ENCODE measurements at regions of chr14 and their contacts with region 1.

Region 1: GRCh38 chr14:50085570-50086320 is 30.6 kb downstream of the VCPKMT start:
- DNase-seq: no peak
- H3K4me3 Mint-ChIP-seq: peak overlapping the region; percentile 28
- H3K27ac Mint-ChIP-seq: peak overlapping the region; percentile 98
- H3K4me1 Mint-ChIP-seq: peaks cover 86% of the 10 kb centered on the region
- H3K27me3 Mint-ChIP-seq: peaks cover 4% of the 10 kb centered on the region

Region 2: DNA sequence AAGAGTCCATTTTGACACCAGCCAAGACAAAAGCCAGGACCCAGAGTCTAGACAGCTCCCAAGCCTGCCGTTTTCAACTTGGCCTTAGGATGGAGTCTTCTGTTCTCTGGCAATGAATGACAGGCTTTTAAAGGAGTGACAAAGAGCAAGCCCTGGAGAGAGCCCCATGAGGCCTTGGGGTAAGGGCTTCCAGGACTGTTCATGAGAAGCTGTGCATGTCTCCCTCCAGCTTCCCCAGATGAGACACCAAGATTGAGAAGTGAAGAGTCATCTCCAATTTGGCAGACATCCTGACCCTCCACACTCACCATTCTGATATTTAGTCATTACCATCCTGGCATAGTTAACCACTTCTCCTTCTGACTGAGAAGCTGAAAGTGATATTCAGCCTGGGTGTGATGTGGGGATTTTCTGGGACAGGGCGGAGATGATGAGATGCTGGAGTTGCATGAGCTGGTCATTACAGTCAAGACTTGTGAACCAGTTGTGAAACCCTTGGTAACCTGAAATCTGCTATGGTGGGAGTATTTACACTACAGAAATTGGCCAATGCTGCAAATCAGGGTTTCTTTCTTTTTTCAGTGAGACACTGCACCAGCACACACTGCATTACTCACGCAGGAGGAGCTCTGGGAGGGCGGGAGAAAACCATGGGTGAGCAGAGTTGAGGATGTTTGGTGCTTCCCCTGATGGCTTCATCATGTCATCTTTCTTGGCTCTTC is 47.2 kb before region 1 on chr14:
- CTCF ChIA-PET with region 1: interaction called, 7 read pairs
- POLR2A ChIA-PET with region 1: interaction called, 37 read pairs
- DNase-seq: peak; percentile 70
- H3K4me3 Mint-ChIP-seq: peak overlapping the region; percentile 79
- H3K27ac Mint-ChIP-seq: peak overlapping the region; percentile 98
- H3K4me1 Mint-ChIP-seq: peaks cover 83% of the 10 kb centered on the region
- H3K27me3 Mint-ChIP-seq: no peaks in the 10 kb centered on the region

Region 3: DNA sequence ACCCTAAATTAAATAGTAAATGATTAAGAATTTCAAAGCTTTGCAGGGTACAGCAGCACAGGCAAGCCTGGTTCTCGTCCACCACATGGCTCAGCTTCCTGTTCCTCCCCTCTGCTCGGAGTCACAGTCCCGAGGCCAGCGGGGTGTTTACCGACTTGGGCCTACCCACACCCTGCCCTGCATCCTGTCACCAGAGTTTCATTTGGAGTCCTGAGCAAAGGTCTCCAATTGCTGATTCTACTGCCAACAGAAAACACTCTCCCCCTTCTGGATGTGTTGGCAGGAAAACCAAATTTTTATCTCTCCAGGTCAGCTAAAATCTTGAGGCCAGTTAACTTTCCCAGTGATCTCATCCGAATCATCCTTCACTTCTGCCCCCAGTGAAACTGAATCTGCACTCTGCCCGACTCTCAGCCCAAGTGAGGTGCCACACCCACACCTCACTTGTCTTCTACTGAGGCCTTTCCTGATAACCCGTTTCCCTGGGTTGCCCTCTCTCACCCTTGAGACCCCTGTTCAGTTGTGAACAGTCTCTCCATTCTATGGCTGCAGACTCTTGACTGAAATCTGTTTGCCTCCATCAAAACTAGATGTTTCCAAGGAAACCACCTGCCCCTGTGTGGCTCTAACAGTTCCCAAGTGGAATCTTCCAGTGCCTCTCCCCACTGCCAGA is 40.6 kb before region 1 on chr14:
- CTCF ChIA-PET with region 1: interaction called, 3 read pairs
- POLR2A ChIA-PET with region 1: interaction called, 37 read pairs
- DNase-seq: peak; percentile 89
- H3K4me3 Mint-ChIP-seq: peak overlapping the region; percentile 6
- H3K27ac Mint-ChIP-seq: peak overlapping the region; percentile 92
- H3K4me1 Mint-ChIP-seq: peaks cover 70% of the 10 kb centered on the region
- H3K27me3 Mint-ChIP-seq: no peaks in the 10 kb centered on the region

Region 4: GRCh38 chr14:50067723-50068495 is 17.8 kb before region 1 on chr14:
- CTCF ChIA-PET with region 1: interaction called, 11 read pairs
- POLR2A ChIA-PET with region 1: interaction called, 184 read pairs
- DNase-seq: no peak
- H3K4me3 Mint-ChIP-seq: no peak overlapping the region
- H3K27ac Mint-ChIP-seq: no peak overlapping the region
- H3K4me1 Mint-ChIP-seq: peaks cover 52% of the 10 kb centered on the region
- H3K27me3 Mint-ChIP-seq: no peaks in the 10 kb centered on the region

Region 5: DNA sequence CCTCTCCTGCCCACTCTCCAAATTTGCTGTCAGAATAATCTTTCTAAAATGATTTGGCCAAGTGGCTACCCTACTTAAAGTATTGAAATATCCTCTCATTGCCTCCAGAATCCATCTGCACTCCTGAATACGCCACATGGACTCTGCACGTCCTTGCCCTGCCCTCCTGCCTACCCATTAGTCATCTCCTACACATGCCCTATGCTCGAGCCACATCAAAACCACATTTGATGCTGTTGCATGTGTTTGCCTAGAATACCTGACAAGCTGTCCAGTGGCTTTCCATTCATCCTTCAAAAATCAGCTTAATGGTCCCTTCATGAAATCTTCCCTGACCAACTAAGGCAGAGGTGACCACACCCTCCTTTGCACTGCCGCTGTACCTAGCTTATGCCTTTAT is 13.6 kb after region 1 on chr14:
- CTCF ChIA-PET with region 1: interaction called, 9 read pairs
- POLR2A ChIA-PET with region 1: interaction called, 36 read pairs
- DNase-seq: no peak
- H3K4me3 Mint-ChIP-seq: no peak overlapping the region
- H3K27ac Mint-ChIP-seq: no peak overlapping the region
- H3K4me1 Mint-ChIP-seq: peaks cover 46% of the 10 kb centered on the region
- H3K27me3 Mint-ChIP-seq: peaks cover 8% of the 10 kb centered on the region

Region 6: DNA sequence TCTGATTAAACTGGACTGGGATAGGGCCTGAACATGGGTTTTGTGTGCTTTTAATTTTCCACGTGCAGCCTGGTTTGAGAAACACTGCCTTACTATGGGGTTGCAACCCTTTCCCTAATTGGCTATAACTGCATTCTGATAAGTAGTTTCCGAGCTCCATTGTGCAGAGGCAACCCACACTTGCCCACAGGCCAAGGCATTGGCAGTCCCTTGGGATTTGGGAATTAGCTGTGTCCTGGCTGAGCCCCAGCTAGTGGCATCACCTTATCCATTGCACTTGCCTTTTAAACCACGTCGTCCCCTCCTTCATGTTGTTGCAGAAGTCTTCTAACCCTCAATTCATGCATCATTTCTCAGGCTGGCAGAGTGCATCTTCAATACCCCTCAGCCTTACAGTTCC is 20.4 kb after region 1 on chr14:
- CTCF ChIA-PET with region 1: interaction called, 9 read pairs
- POLR2A ChIA-PET with region 1: interaction called, 11 read pairs
- DNase-seq: no peak
- H3K4me3 Mint-ChIP-seq: no peak overlapping the region
- H3K27ac Mint-ChIP-seq: no peak overlapping the region
- H3K4me1 Mint-ChIP-seq: peaks cover 31% of the 10 kb centered on the region
- H3K27me3 Mint-ChIP-seq: no peaks in the 10 kb centered on the region

Region 7: DNA sequence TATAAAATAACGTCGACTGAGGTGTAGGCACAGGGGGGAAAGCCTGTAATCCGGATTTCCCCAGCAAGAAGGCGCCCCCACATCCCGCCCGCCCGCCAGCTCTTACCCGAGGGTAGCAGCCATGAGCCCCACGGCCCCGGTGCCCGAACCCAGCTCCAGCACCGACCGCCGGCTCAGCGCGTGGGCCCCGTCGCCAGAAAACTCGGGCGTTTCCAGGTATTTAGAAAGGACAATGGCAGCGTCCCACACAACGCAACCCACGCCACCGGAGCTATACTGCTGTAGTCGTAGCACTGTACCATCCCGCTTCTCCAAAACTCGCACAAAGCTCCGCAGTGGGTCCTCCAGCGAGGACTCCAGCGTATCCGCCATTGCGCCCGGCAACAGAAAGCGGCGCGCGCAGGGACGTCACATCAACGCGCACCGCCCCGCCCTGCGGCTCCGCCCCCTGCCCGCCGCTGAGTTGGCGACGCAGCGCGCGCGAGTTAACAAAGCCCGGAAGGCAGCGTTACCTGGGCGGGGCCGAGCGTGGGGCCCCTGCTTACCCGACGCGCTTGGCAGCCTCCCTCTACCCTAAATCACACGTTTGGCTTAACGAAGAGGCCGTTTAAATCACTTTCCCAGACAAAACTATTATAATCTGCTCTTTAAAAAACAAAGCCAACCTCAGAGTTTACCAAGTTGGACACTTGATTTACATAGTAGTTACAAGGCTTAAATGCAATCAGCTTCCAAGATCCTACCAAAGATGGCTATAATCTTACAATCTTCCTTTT is 30.6 kb after region 1 on chr14 and contains the start of gene VCPKMT:
- CTCF ChIA-PET with region 1: interaction called, 3 read pairs
- POLR2A ChIA-PET with region 1: interaction called, 18 read pairs
- DNase-seq: peak; percentile 97
- H3K4me3 Mint-ChIP-seq: peak within 1 kb of the TSS; percentile 99
- H3K27ac Mint-ChIP-seq: peak within 1 kb of the TSS; percentile 97
- H3K4me1 Mint-ChIP-seq: peaks cover 40% of the 10 kb centered on the region
- H3K27me3 Mint-ChIP-seq: no peaks in the 10 kb centered on the region
- total RNA-seq, gene VCPKMT: 7.5 to 9.5 TPM

Region 8: DNA sequence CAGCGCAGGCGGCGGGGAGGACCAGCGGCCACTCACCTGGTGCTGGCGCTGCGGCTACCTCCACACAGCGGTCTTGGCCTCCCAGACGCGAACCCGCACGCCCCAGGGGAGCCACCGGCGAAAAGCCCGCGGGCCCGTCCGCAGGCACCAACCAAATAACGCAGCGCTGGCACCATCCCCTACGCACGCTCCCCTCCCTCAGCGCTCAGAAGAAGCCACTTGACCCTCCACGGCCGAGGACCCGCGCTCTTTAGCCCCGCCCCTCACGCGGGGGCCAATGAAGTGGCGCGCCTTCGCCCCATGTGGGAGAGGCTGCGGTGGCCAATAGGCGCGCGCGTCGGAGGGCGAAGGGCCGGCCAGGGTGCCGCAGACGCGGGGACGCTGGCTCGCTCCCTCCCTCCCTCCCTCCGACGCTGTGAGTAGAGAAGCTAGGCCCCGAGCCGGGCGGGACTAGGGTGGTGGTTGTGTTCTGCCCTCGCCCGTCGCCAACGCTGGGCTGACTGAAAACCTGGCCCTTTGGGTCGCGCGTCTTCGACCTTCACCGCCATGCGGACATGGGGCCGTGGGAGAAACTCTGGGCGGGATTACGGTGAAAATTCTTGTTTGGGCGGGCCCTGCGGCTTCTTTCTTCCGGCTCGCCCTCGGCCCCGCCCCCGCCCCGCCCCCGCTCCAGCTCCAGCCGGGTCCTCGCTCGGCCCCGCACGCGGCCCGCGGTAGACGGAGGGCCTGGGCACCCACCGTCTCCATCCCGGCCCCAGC is 226.4 kb after region 1 on chr14 and contains the starts of genes DMAC2L and L2HGDH:
- CTCF ChIA-PET with region 1: no interaction called
- POLR2A ChIA-PET with region 1: no interaction called
- DNase-seq: peak; percentile 91
- H3K4me3 Mint-ChIP-seq: peak within 1 kb of the TSS; percentile 95
- H3K27ac Mint-ChIP-seq: peak within 1 kb of the TSS; percentile 84
- H3K4me1 Mint-ChIP-seq: peaks cover 35% of the 10 kb centered on the region
- H3K27me3 Mint-ChIP-seq: no peaks in the 10 kb centered on the region
- total RNA-seq, gene DMAC2L: 12.2 to 12.6 TPM
- total RNA-seq, gene L2HGDH: 9.7 to 10.0 TPM